Activated CD4-positive, alpha-beta memory T cell treated with anti-CD3 and anti-CD28 coated beads for 36 hours (primary cell): ENCODE measurements at regions of chr17 and their contacts with region 1.

Region 1: DNA sequence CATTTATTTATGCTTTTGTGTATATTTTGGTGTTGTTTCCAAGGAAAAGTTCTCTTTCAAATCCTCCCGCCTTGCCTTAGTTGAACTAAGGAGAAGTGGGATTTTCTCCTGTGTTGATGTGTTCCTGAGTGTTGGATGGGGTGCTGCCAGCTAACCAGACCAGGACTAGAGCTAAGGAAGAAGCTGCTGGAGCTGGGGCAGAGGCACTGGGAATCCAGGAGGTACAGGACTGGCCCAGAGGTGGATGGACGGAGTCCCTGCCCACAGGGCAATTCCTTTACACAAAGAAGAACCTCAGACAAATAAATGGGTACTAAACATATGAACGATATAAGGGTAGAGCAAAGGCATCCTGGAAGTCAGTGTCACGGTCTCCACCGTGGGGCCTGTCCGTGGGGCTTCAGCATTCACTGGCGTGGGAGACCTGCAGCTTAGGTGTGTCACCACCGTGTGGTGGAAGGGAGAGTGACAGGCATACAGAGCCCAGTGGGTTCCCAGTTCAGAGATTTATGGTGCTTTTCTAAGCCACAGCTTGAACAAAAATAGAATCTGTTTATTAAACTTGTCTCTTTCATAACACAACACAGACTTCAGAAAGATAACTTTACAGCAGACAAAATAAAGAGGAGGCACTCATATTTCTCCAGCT is 270.7 kb downstream of the NTN1 start:
- DNase-seq: peak; percentile 66
- H3K4me3 Mint-ChIP-seq: no peak overlapping the region
- H3K27ac Mint-ChIP-seq: no peak overlapping the region
- H3K4me1 Mint-ChIP-seq: peaks cover 28% of the 10 kb centered on the region
- H3K27me3 Mint-ChIP-seq: no peaks in the 10 kb centered on the region

Region 2: DNA sequence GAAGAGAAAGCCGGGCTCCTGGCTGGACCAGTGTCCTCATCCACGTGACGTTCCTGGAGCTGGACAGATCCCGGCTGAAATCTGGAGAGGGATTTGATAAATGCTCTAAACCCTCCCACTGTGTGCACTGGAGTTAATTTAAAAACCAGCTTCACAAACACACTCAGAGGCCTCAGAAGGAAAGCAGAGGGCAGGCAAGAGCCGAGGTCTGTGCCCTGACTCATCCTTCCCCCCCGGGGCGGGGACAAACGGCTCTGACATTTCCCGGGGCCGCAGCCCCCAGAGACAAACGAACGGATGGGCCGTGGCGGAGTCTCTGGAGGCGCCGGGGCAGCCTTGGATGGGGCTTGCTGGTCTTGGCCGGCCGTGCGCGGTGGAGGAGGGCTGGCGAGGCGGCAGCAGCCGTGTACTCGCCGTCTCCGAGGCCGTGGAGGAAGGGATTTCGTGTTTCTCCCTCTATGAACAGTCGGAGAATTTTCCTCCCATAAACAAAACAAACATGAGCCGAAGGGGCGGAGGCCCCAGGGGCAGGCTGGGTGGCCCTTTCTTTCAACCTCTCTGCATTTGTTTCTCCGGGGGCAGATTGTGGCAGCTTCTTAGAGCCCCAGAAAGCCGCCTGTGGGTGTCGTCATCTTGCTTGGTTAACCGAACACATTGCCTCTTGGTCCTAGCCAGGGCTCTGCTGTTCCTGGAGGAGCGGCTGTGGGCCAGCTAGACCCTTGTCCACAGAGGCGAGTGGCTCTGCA is 176.4 kb before region 1 on chr17:
- CTCF ChIA-PET with region 1: interaction called, 7 read pairs
- POLR2A ChIA-PET with region 1: no interaction called
- intact Hi-C with region 1: loop called (anchors 5 kb)
- DNase-seq: peak; percentile 67
- H3K4me3 Mint-ChIP-seq: peak overlapping the region; percentile 39
- H3K27ac Mint-ChIP-seq: no peak overlapping the region
- H3K4me1 Mint-ChIP-seq: peaks cover 4% of the 10 kb centered on the region
- H3K27me3 Mint-ChIP-seq: peaks cover 15% of the 10 kb centered on the region

Region 3: DNA sequence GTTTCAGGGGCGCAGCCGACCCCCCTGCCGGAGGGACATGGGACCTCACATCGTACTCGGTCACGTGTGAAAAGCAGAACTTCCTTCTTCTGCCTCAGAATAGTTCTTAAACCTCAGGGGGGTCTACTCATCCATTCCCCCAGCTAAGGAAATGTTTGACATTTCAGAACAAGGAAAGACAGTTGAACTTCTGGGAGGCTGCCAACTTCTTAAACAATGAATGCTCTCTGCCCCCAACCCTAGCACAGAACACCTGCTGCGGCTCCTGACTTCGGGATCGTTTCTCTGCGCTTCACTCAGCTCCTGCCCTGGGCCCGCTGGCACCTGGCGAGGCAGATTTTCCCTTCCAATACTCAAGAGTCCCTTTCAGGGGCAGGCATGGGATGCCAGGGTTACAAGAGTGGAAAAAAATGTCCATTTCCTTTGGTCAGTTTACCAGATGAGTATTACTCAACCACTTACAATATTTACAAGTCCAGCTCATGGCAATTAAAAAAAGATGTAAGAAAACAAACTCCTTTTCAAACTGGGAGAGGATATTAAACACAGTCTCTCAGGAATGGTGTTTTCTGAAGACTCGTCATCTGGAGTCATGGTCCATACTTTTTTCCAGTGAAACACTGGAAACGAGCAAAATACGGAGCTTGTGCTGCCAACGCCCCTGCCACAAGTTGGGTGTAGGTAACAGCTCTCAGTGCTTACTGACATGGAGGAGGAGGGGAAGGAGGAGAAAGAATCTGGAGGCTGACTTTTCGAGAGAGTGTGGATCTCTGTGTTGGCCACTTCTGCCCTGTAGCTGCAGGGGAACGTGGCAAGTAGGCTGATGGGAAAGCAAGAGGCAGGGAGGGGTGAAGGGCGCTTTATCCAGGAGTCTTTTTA is 35.0 kb before region 1 on chr17:
- CTCF ChIA-PET with region 1: interaction called, 5 read pairs
- POLR2A ChIA-PET with region 1: interaction called, 4 read pairs
- intact Hi-C with region 1: loop called (anchors 1 kb)
- DNase-seq: no peak
- H3K4me3 Mint-ChIP-seq: no peak overlapping the region
- H3K27ac Mint-ChIP-seq: no peak overlapping the region
- H3K4me1 Mint-ChIP-seq: peaks cover 22% of the 10 kb centered on the region
- H3K27me3 Mint-ChIP-seq: no peaks in the 10 kb centered on the region

Region 4: GRCh38 chr17:9470171-9470570 is 178.1 kb after region 1 on chr17:
- CTCF ChIA-PET with region 1: interaction called, 3 read pairs
- POLR2A ChIA-PET with region 1: no interaction called
- intact Hi-C with region 1: loop called (anchors 5 kb)
- DNase-seq: no peak
- H3K4me3 Mint-ChIP-seq: peak overlapping the region; percentile 26
- H3K27ac Mint-ChIP-seq: peak overlapping the region; percentile 77
- H3K4me1 Mint-ChIP-seq: peaks cover 45% of the 10 kb centered on the region
- H3K27me3 Mint-ChIP-seq: no peaks in the 10 kb centered on the region

Region 5: GRCh38 chr17:9566067-9566466 is 274.0 kb after region 1 on chr17:
- CTCF ChIA-PET with region 1: no interaction called
- POLR2A ChIA-PET with region 1: no interaction called
- intact Hi-C with region 1: loop called (anchors 2 kb)
- DNase-seq: no peak
- H3K4me3 Mint-ChIP-seq: peak overlapping the region; percentile 14
- H3K27ac Mint-ChIP-seq: no peak overlapping the region
- H3K4me1 Mint-ChIP-seq: peaks cover 25% of the 10 kb centered on the region
- H3K27me3 Mint-ChIP-seq: no peaks in the 10 kb centered on the region